Ascending aorta (tissue), 2 donors: ENCODE measurements at regions of chrX and their contacts with region 1.

Region 1: GRCh38 chrX:63560601-63561218 is 209.6 kb upstream of the SPIN4 start:
- DNase-seq: peak in 1 of 2 donors; percentile 72
- H3K4me3 ChIP-seq: peak overlapping the region; percentile 61 to 78
- H3K27ac ChIP-seq: peak overlapping the region; percentile 57 to 73
- H3K4me1 ChIP-seq: no peaks in the 10 kb centered on the region
- H3K27me3 ChIP-seq: no peaks in the 10 kb centered on the region
- CTCF ChIP-seq: no peak

Region 2: DNA sequence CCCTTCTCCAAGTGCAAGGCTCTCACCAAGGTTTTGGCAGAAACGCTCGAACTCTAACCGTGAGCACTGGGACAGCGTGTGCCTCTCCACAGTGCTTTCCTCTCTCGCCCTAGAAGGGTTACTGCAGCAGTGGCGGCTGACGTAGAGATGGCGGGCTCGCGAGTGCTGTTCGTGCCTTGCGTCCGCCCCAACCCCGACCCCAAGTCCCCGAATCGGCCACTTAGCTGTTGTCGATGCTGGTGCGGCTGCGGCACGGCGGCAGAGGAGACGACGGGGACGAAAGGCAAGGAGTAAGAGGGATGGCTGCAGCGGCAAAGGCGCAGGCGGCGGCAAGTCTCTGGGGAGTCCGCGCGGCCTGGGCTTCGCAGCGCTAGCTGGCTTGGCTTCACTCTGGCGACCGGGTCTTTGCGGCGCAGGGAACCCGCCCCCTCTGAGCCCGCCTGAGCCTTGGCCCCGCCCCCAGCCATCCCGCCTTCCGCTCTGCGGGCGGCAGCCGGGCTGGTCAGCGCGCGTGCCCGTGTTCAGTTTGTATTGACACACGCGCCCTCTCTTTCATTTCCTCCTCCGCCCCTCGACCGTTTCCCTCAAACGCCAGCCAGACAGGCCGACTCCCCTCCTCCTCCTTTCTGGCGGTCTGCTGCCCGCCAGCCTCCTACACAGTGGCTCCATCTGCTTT is 209.6 kb before region 1 on chrX and contains the start of gene SPIN4:
- intact Hi-C with region 1: loop called (anchors 2 kb)
- DNase-seq: peak; percentile 39 to 91
- H3K4me3 ChIP-seq: peak within 1 kb of the TSS; percentile 66 to 68
- H3K27ac ChIP-seq: peak within 1 kb of the TSS; percentile 70 to 72
- H3K4me1 ChIP-seq: no peaks in the 10 kb centered on the region
- H3K27me3 ChIP-seq: no peaks in the 10 kb centered on the region
- CTCF ChIP-seq: no peak
- total RNA-seq, gene SPIN4: 9.2 TPM

Region 3: GRCh38 chrX:63513825-63514568 is 46.7 kb before region 1 on chrX:
- intact Hi-C with region 1: loop called (anchors 5 kb)
- DNase-seq: no peak
- H3K4me3 ChIP-seq: no peak overlapping the region
- H3K27ac ChIP-seq: no peak overlapping the region
- H3K4me1 ChIP-seq: peaks cover 0 to 5% of the 10 kb centered on the region in 2 donors
- H3K27me3 ChIP-seq: no peaks in the 10 kb centered on the region
- CTCF ChIP-seq: no peak

Region 4: DNA sequence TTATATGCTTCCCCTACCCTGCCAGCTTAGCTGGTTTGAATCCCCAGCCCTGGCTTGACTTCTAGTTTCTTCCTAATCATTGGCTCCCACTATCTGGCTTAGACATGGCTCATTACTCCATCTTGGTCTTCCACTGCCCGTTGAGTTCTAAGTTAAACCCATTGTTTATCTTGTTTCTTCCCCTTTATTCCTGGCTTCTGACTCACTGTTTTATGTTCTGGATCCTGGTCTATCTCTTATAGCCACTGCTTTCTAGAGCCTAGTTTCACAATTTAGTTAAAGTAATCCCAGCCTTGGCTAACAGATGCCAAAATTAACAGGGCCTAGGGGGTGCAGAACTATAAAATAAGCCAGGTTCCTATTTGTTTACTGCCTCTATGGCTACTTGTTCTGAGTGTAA is 103.4 kb after region 1 on chrX:
- intact Hi-C with region 1: loop called (anchors 10 kb)
- DNase-seq: no peak
- H3K4me3 ChIP-seq: no peak overlapping the region
- H3K27ac ChIP-seq: peak overlapping the region; percentile 4 to 48
- H3K4me1 ChIP-seq: no peaks in the 10 kb centered on the region
- H3K27me3 ChIP-seq: no peaks in the 10 kb centered on the region
- CTCF ChIP-seq: no peak

Region 5: GRCh38 chrX:63761639-63762038 is 200.9 kb after region 1 on chrX:
- intact Hi-C with region 1: loop called (anchors 5 kb)
- DNase-seq: no peak
- H3K4me3 ChIP-seq: no peak overlapping the region
- H3K27ac ChIP-seq: peak overlapping the region; percentile 45 to 72
- H3K4me1 ChIP-seq: no peaks in the 10 kb centered on the region
- H3K27me3 ChIP-seq: no peaks in the 10 kb centered on the region
- CTCF ChIP-seq: peak in 2 of 3 experiments; percentile 30 to 41